ENCODE measurements at regions of chr9 and their contacts with region 1.

Region 1: DNA sequence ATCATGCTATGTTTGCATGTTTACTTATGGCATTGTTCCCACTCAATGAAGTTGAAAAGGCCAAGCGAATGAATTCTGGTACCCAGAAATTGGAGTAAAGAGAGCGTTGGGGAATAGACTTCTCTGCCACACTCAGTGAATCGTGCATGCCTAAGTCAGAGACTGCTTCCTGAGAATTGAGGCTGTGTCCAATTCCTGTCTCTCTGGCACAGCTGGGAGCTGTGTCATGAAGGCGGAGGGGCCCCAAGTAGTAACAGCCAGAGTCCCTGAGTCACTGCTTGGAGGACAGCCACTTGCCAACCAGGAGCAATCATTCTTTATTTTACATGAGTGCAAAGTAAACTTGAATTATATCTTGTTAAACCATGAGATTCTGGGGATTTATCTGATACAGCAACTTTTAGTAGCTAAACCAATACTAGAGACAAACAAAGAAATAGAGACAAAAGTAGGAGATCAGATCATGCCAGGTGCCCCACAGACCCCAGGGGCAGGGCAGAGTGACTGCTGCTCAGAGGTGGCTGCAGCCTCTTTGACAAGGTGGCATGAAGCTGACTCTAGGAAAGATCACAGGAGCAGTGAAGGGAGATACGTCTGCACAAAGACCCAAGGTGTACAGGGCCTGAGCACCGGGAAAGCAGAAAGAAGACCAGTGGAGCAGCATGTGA is 245.9 kb downstream of the GADD45G start:
- DNase-seq: peak; percentile 23
- H3K4me3 Mint-ChIP-seq: no peak overlapping the region
- H3K27ac Mint-ChIP-seq: no peak overlapping the region
- H3K4me1 Mint-ChIP-seq: peaks cover 12% of the 10 kb centered on the region
- H3K27me3 Mint-ChIP-seq: peaks cover 25% of the 10 kb centered on the region
- CTCF ChIP-seq: no peak

Region 2: DNA sequence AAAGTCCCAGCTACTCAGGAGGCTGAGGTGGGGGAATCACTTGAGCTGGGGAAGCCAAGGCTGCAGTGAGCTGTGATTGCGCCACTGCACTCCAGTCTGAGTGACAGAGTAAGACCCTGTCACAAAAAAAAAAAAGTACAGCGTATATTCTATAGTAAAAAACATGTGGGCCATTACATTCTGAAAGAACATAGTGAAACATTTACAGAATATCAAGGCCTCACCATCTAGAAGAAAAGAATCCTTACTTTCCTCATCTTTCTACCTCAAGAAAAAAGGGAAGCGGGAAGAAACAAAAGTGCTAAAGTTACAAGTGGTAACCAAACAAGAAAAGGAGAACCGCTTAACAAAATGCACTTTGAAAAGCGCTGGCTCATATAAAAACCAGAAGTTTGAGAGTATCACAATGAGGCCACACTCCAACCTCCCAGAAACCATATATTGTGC is 945.2 kb after region 1 on chr9:
- CTCF ChIA-PET with region 1: no interaction called
- POLR2A ChIA-PET with region 1: no interaction called
- intact Hi-C with region 1: loop called (anchors 10 kb)
- DNase-seq: no peak
- H3K4me3 Mint-ChIP-seq: no peak overlapping the region
- H3K27ac Mint-ChIP-seq: no peak overlapping the region
- H3K4me1 Mint-ChIP-seq: no peaks in the 10 kb centered on the region
- H3K27me3 Mint-ChIP-seq: peaks cover 34% of the 10 kb centered on the region
- CTCF ChIP-seq: no peak

Measured in MCF 10A (cell line).